HCT116 (cell line): ENCODE measurements at regions of chr9 and their contacts with region 1.

Region 1: GRCh38 chr9:29220596-29221251 is 1647.4 kb upstream of the C9orf72 start:
- DNase-seq: no peak
- ATAC-seq: no peak
- H3K4me3 ChIP-seq: no peak overlapping the region
- H3K27ac ChIP-seq: no peak overlapping the region
- H3K4me1 ChIP-seq: no peaks in the 10 kb centered on the region
- H3K27me3 ChIP-seq: no peaks in the 10 kb centered on the region
- CTCF ChIP-seq: no peak
- POLR2A ChIP-seq: no peak
- RAD21 ChIP-seq: no peak

Region 2: GRCh38 chr9:28389411-28389810 is 831.3 kb before region 1 on chr9:
- CTCF ChIA-PET with region 1: no interaction called
- POLR2A ChIA-PET with region 1: no interaction called
- RAD21 ChIA-PET with region 1: no interaction called
- intact Hi-C with region 1: no loop called
- DNase-seq: no peak
- ATAC-seq: no peak
- H3K4me3 ChIP-seq: no peak overlapping the region
- H3K27ac ChIP-seq: no peak overlapping the region
- H3K4me1 ChIP-seq: no peaks in the 10 kb centered on the region
- H3K27me3 ChIP-seq: no peaks in the 10 kb centered on the region
- CTCF ChIP-seq: no peak
- POLR2A ChIP-seq: no peak
- RAD21 ChIP-seq: no peak

Region 3: DNA sequence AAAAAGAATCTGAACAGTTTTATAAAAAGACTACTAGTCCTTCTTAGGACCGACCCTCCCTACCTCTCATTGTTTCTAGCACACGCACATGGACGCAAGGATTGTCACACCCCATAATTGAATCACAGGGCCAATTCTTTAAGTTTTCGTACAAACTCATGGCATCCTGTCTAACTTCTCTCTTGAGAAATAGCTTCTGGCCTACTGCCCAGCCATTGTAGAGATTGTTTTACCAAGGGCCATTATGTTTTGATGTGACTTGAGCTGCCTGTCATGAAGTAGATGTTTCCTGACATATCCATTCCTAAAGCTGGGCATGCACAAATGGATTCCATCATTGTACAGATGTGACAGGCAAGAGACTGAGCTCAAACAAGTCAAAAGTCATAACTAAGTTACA is 24.6 kb after region 1 on chr9:
- CTCF ChIA-PET with region 1: no interaction called
- POLR2A ChIA-PET with region 1: no interaction called
- RAD21 ChIA-PET with region 1: no interaction called
- intact Hi-C with region 1: loop called (anchors 2 kb)
- DNase-seq: no peak
- ATAC-seq: no peak
- H3K4me3 ChIP-seq: no peak overlapping the region
- H3K27ac ChIP-seq: no peak overlapping the region
- H3K4me1 ChIP-seq: no peaks in the 10 kb centered on the region
- H3K27me3 ChIP-seq: no peaks in the 10 kb centered on the region
- CTCF ChIP-seq: no peak
- POLR2A ChIP-seq: no peak
- RAD21 ChIP-seq: no peak

Region 4: GRCh38 chr9:29873579-29873978 is 652.9 kb after region 1 on chr9:
- CTCF ChIA-PET with region 1: no interaction called
- POLR2A ChIA-PET with region 1: no interaction called
- RAD21 ChIA-PET with region 1: no interaction called
- intact Hi-C with region 1: no loop called
- DNase-seq: no peak
- ATAC-seq: no peak
- H3K4me3 ChIP-seq: no peak overlapping the region
- H3K27ac ChIP-seq: no peak overlapping the region
- H3K4me1 ChIP-seq: no peaks in the 10 kb centered on the region
- H3K27me3 ChIP-seq: no peaks in the 10 kb centered on the region
- CTCF ChIP-seq: no peak
- POLR2A ChIP-seq: no peak
- RAD21 ChIP-seq: no peak

Region 5: DNA sequence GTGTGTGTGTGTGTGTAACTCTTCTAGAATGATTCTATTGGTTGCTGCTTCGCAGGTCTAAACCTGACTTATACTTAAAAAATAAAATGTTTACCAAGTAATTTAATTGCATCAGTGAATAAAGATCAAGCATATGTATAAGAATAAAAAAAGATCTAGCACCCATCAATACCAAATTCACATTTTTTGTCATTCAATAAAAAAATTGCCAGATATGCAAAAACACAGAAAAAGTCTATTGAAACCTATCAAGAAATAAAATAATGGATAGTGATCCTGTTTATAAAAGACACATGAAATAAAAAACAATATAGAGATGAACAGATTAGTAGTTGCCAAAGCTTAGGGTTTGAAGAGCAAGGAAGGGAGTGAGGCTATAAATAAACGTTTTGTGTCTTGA is 1068.7 kb after region 1 on chr9:
- CTCF ChIA-PET with region 1: no interaction called
- POLR2A ChIA-PET with region 1: no interaction called
- RAD21 ChIA-PET with region 1: no interaction called
- intact Hi-C with region 1: no loop called
- DNase-seq: no peak
- ATAC-seq: no peak
- H3K4me3 ChIP-seq: no peak overlapping the region
- H3K27ac ChIP-seq: no peak overlapping the region
- H3K4me1 ChIP-seq: no peaks in the 10 kb centered on the region
- H3K27me3 ChIP-seq: no peaks in the 10 kb centered on the region
- CTCF ChIP-seq: no peak
- POLR2A ChIP-seq: no peak
- RAD21 ChIP-seq: no peak